Thyroid gland (tissue), 4 donors: ENCODE measurements at regions of chr10 and their contacts with region 1.

Region 1: DNA sequence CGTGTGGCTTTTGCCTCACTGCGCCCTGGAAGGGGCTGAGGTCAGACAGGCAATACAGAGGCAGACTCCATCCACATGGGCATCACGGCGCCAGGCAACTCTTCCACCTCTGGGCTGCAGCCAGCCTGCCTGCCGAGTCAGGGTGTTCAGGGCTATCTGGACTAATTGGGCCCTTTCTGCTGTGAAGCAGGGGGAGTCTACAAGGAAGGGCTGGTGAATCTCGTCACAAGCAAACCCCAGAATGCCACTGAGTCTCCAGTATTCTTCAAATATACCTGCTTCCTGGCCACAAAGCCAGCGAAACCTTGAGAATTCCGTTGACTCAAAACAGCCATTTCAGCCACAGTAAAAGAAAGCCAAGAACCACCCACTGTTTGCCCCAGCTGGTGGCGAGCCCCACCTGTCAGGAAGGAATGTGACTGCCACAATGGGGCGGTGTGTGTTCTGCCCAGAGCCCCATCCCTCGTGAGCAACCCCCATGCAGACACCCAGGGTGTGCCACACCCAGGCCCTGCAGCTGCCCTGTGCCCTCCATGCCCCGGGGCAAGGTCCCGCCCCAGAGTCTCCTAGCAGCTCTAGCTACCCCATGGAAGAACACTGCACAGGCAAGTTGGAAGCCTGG is 117.3 kb downstream of the FAM53B start:
- DNase-seq: peak in 1 of 2 donors; percentile 42
- H3K4me3 ChIP-seq: no peak overlapping the region
- H3K27ac ChIP-seq: peak overlapping the region; percentile 67 to 98 (median 88)
- H3K4me1 ChIP-seq: peaks cover 94 to 100% of the 10 kb centered on the region in 2 donors
- H3K27me3 ChIP-seq: no peaks in the 10 kb centered on the region
- CTCF ChIP-seq: no peak
- POLR2A ChIP-seq: no peak

Region 2: GRCh38 chr10:124043310-124044142 is 583.3 kb before region 1 on chr10:
- intact Hi-C with region 1: no loop called
- DNase-seq: no peak
- H3K4me3 ChIP-seq: no peak overlapping the region
- H3K27ac ChIP-seq: no peak overlapping the region
- H3K4me1 ChIP-seq: peaks cover 0 to 5% of the 10 kb centered on the region in 2 donors
- H3K27me3 ChIP-seq: no peaks in the 10 kb centered on the region
- CTCF ChIP-seq: no peak
- POLR2A ChIP-seq: no peak

Region 3: DNA sequence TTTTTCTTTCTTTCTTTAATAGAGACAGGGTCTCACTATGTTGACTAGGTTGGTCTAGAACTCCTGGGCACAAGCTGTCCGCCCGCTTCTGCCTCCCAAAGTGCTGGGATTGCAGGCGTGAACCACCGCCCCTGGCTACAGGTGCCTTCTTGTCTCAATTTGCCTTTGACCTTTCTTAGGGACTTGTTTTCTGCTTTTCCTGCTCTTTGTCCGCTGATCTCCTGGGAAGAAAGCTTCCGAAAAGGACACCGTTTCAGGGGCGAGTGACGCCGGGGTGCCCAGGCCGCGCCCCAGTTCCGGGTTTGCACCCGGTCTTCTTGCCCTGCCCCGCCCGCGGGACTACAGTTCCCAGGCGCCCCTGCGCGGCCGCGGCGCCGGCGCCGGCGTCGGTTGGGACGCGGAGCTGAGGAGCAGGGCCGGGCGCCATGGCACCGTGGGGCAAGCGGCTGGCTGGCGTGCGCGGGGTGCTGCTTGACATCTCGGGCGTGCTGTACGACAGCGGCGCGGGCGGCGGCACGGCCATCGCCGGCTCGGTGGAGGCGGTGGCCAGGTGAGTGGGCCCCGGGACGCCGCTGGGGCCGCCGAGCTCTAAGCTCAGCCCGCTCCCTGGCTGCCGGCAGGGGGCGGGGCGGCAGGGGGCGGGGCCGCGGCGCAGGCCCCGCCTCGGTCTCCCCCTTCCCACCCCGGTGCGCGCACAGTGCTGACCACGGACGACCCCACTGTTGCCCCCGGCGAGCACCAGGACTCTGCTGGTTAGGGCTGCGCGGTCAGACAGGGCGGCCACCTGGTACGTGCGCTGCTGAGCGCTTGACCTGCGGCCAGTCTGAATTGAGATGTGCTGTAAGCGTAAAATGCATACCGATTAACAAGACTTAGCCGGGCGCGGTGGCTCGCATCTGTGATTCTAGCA is 165.2 kb before region 1 on chr10 and contains the start of gene LHPP:
- intact Hi-C with region 1: no loop called
- DNase-seq: peak; percentile 83 to 88
- H3K4me3 ChIP-seq: peak within 1 kb of the TSS; percentile 16 to 46 (median 43)
- H3K27ac ChIP-seq: peak within 1 kb of the TSS; percentile 63 to 87 (median 75)
- H3K4me1 ChIP-seq: peaks cover 39 to 51% of the 10 kb centered on the region in 2 donors
- H3K27me3 ChIP-seq: no peaks in the 10 kb centered on the region
- CTCF ChIP-seq: peak in 4 of 6 experiments; percentile 13 to 55 (median 46)
- POLR2A ChIP-seq: peak in 1 of 2 donors; percentile 84
- total RNA-seq, gene LHPP: 8.3 to 69.9 (median 48.3) TPM

Region 4: DNA sequence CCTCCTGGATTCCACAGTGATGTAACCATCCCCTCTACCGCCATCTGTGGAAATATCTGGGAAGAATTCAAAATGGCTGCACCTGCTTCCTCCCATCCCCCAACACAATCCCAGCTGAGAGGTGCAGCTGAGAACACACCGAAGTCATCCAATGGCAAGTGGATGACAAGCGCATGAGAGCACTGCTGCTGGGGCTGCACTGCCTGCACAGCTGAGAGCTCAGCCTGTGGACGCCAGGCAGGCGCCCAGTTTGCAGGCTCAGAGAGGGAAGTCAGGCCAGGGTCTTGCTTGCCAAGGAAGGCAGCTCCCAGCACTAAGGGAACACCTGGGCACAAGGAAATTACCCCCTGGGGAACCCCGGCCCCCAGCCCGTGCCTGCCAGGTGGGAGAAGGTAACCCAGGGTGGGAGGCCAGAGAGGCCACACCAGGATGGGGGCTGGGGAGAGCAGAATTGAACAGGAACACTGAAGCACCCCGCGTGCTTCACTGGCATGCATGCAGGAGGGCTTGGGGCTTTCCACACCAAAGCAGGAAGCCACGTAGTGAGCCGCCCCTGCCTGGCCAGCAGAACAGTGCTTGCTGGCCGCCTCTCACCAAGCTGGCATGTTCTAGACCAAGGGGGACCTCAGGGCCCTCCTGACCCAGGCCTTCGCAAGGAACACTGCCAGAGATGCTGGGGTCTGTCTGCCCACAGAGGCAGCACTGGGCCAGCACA is 71.1 kb after region 1 on chr10:
- intact Hi-C with region 1: loop called (anchors 10 kb)
- DNase-seq: peak; percentile 70 to 78
- H3K4me3 ChIP-seq: no peak overlapping the region
- H3K27ac ChIP-seq: peak overlapping the region; percentile 75 to 92 (median 91)
- H3K4me1 ChIP-seq: peaks cover 66 to 97% of the 10 kb centered on the region in 2 donors
- H3K27me3 ChIP-seq: no peaks in the 10 kb centered on the region
- CTCF ChIP-seq: no peak
- POLR2A ChIP-seq: no peak

Region 5: DNA sequence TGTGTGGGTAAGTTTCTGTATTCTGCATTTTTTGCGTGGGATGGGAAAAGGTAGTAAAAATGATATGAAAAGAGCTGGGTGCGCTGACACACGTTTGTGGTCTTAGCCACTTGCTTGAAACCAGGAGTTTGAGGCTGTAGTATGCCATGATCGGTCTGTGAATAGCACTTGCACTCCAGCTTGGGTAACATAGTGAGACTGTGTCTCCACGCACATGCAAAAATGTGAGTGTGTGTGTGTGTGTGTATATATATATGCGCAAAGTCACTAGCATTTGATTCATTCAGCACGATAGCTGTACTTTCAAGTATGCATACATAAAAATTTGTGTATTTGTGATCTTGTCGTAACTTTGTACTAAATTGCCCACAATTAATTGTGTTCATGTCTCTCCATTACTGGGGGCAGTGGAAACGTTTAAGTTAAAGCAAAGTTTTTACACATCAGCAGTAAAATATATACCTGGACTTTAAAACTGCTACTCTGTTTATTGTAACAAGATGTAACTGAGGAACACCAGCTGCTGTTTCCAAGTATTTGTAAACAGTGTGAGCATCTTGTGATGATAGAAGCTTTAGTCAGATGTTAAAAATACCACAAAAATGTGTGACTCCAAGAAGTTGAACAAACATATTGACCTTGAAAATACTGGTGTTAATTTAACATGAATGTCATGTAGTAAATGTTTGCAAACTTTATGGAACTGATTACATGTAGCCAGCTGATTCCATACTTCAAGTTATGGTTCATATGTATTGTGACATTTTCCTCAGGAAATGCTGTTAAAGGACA is 316.6 kb after region 1 on chr10:
- intact Hi-C with region 1: no loop called
- DNase-seq: no peak
- H3K4me3 ChIP-seq: no peak overlapping the region
- H3K27ac ChIP-seq: no peak overlapping the region
- H3K4me1 ChIP-seq: peaks cover 39 to 49% of the 10 kb centered on the region in 2 donors
- H3K27me3 ChIP-seq: no peaks in the 10 kb centered on the region
- CTCF ChIP-seq: no peak
- POLR2A ChIP-seq: no peak